Activated CD4-positive, alpha-beta T cell treated with anti-CD3 and anti-CD28 coated beads, Interleukin-2, amount 10 ng/mL, durations not matched to agents 24 days and 14 days (primary cell): ENCODE measurements at regions of chr5 and their contacts with region 1.

Region 1: GRCh38 chr5:43514816-43515677 is at the start of gene C5orf34:
- DNase-seq: peak; percentile 98
- H3K4me3 Mint-ChIP-seq: peak within 1 kb of the TSS; percentile 95
- H3K27ac Mint-ChIP-seq: peak within 1 kb of the TSS; percentile 96
- H3K4me1 Mint-ChIP-seq: peaks cover 23% of the 10 kb centered on the region
- H3K27me3 Mint-ChIP-seq: no peaks in the 10 kb centered on the region
- total RNA-seq, gene C5orf34: 6.8 and 8.7 TPM in 2 replicates

Region 2: GRCh38 chr5:43376496-43377140 is 138.4 kb before region 1 on chr5:
- intact Hi-C with region 1: no loop called
- DNase-seq: no peak
- H3K4me3 Mint-ChIP-seq: no peak overlapping the region
- H3K27ac Mint-ChIP-seq: no peak overlapping the region
- H3K4me1 Mint-ChIP-seq: peaks cover 5% of the 10 kb centered on the region
- H3K27me3 Mint-ChIP-seq: no peaks in the 10 kb centered on the region

Region 3: GRCh38 chr5:43556857-43557542 is 42.0 kb after region 1 on chr5 and contains the start of gene PAIP1:
- intact Hi-C with region 1: loop called (anchors 1 kb)
- DNase-seq: peak; percentile 96
- H3K4me3 Mint-ChIP-seq: peak within 1 kb of the TSS; percentile 91
- H3K27ac Mint-ChIP-seq: peak within 1 kb of the TSS; percentile 90
- H3K4me1 Mint-ChIP-seq: peaks cover 12% of the 10 kb centered on the region
- H3K27me3 Mint-ChIP-seq: peaks cover 13% of the 10 kb centered on the region
- total RNA-seq, gene PAIP1: 60.2 and 64.1 TPM in 2 replicates

Region 4: GRCh38 chr5:43676083-43676840 is 161.2 kb after region 1 on chr5:
- intact Hi-C with region 1: no loop called
- DNase-seq: no peak
- H3K4me3 Mint-ChIP-seq: no peak overlapping the region
- H3K27ac Mint-ChIP-seq: peak overlapping the region; percentile 26
- H3K4me1 Mint-ChIP-seq: peaks cover 1% of the 10 kb centered on the region
- H3K27me3 Mint-ChIP-seq: no peaks in the 10 kb centered on the region

Region 5: DNA sequence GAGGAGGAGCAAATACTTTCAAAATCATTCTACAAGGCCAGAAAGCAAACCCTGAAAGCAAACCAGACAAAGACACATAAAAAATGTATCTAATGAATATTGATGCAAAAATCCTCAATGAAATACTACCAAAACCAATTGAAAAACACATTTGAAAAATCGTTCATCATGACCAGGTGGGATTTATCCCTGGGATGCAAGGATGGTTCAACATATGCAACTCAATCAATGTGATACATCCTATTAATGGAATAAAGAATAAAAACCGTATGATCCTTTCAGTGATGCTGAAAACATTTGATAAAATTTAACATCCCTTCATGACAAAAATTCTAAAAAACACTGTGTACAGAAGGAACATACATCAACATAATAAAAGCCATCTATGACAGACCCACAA is 425.5 kb after region 1 on chr5:
- intact Hi-C with region 1: no loop called
- DNase-seq: no peak
- H3K4me3 Mint-ChIP-seq: no peak overlapping the region
- H3K27ac Mint-ChIP-seq: no peak overlapping the region
- H3K4me1 Mint-ChIP-seq: no peaks in the 10 kb centered on the region
- H3K27me3 Mint-ChIP-seq: no peaks in the 10 kb centered on the region